MCF 10A (cell line): ENCODE measurements at regions of chr13 and their contacts with region 1.

Region 1: GRCh38 chr13:24851545-24851944 is 87.6 kb downstream of the RNF17 start:
- DNase-seq: peak; percentile 73
- H3K4me3 Mint-ChIP-seq: peak overlapping the region; percentile 56
- H3K27ac Mint-ChIP-seq: peak overlapping the region; percentile 97
- H3K4me1 Mint-ChIP-seq: peaks cover 15% of the 10 kb centered on the region
- H3K27me3 Mint-ChIP-seq: no peaks in the 10 kb centered on the region
- CTCF ChIP-seq: no peak

Region 2: GRCh38 chr13:24683838-24684599 is 167.5 kb before region 1 on chr13:
- CTCF ChIA-PET with region 1: no interaction called
- POLR2A ChIA-PET with region 1: no interaction called
- intact Hi-C with region 1: no loop called
- DNase-seq: peak; percentile 62
- H3K4me3 Mint-ChIP-seq: no peak overlapping the region
- H3K27ac Mint-ChIP-seq: no peak overlapping the region
- H3K4me1 Mint-ChIP-seq: no peaks in the 10 kb centered on the region
- H3K27me3 Mint-ChIP-seq: peaks cover 11% of the 10 kb centered on the region
- CTCF ChIP-seq: peak; percentile 93

Region 3: GRCh38 chr13:24788538-24788937 is 63.0 kb before region 1 on chr13:
- CTCF ChIA-PET with region 1: interaction called, 5 read pairs
- POLR2A ChIA-PET with region 1: interaction called, 19 read pairs
- intact Hi-C with region 1: no loop called
- DNase-seq: peak; percentile 12
- H3K4me3 Mint-ChIP-seq: no peak overlapping the region
- H3K27ac Mint-ChIP-seq: no peak overlapping the region
- H3K4me1 Mint-ChIP-seq: no peaks in the 10 kb centered on the region
- H3K27me3 Mint-ChIP-seq: no peaks in the 10 kb centered on the region
- CTCF ChIP-seq: no peak

Region 4: DNA sequence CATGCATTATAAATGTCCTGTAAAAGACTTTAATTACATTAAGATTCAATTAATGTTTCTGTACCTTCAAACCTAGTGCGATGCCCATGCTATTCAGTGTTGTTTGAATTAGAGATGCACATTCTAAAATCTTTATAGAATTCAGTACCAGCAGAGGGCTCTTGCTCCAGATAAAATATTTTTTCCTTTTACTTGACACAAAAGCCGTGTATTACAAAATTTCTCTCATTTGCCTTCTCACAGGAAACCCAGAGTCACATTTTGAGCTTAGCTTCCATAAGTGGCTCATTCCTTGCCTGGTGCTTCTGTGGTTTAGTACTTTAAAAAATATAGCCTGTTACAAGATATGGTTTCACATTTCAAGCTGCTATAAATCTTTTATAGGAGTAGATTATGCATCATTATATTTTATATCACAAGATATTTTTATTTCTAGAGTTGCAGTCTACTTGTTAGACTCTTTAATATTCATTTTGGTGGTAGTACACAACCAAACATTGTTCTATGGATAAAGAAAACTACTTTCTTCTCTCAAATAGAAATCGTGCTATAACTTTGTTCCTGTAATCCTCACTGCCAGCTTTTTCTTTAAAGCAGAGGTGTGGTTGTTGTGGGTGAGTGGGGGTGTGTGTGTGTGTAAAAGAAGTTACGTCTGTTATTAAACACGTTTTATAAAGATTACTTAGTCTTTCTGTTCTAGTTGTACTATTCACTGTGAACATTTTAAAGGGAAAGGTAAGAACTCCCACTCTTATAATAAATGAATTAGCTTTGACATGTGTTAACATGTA is 13.8 kb after region 1 on chr13:
- CTCF ChIA-PET with region 1: interaction called, 5 read pairs
- POLR2A ChIA-PET with region 1: interaction called, 34 read pairs
- intact Hi-C with region 1: no loop called
- DNase-seq: peak; percentile 16
- H3K4me3 Mint-ChIP-seq: no peak overlapping the region
- H3K27ac Mint-ChIP-seq: no peak overlapping the region
- H3K4me1 Mint-ChIP-seq: peaks cover 16% of the 10 kb centered on the region
- H3K27me3 Mint-ChIP-seq: no peaks in the 10 kb centered on the region
- CTCF ChIP-seq: no peak

Region 5: GRCh38 chr13:24922745-24923591 is 71.4 kb after region 1 on chr13:
- CTCF ChIA-PET with region 1: interaction called, 3 read pairs
- POLR2A ChIA-PET with region 1: interaction called, 8 read pairs
- intact Hi-C with region 1: loop called (anchors 5 kb)
- DNase-seq: peak; percentile 97
- H3K4me3 Mint-ChIP-seq: peak overlapping the region; percentile 89
- H3K27ac Mint-ChIP-seq: peak overlapping the region; percentile 98
- H3K4me1 Mint-ChIP-seq: peaks cover 10% of the 10 kb centered on the region
- H3K27me3 Mint-ChIP-seq: no peaks in the 10 kb centered on the region
- CTCF ChIP-seq: no peak

Region 6: GRCh38 chr13:24943136-24943535 is 91.6 kb after region 1 on chr13:
- CTCF ChIA-PET with region 1: no interaction called
- POLR2A ChIA-PET with region 1: no interaction called
- intact Hi-C with region 1: no loop called
- DNase-seq: no peak
- H3K4me3 Mint-ChIP-seq: no peak overlapping the region
- H3K27ac Mint-ChIP-seq: no peak overlapping the region
- H3K4me1 Mint-ChIP-seq: no peaks in the 10 kb centered on the region
- H3K27me3 Mint-ChIP-seq: no peaks in the 10 kb centered on the region
- CTCF ChIP-seq: no peak

Region 7: DNA sequence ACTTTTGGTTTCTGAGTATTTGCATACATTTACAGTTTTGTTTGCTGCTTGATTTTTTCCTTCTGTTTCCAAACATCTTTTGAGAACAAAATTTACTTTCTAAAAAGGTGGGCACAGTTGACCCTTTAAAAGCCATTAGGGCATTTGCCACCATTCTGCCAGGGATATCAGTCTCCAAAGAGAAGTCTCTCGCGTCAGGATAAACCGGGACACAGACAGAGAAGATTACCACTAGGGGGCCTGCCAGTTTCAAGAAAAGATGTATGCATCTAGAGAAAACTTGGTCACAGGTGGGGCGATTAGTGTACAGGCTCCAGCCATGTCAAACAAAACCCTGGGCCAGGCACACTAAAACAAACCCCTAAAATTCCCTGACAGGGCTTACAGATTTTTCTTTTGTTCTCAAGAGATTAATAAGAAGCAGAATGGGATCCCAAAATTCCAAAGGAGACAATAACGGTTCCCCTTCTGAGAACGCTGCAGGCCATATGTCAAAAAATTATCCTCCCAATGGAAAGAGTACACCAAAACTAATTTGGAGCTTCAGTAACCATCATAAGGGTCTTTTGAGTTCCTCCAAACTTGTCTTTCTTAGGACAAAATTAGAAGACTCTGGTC is 233.7 kb after region 1 on chr13:
- CTCF ChIA-PET with region 1: no interaction called
- POLR2A ChIA-PET with region 1: no interaction called
- intact Hi-C with region 1: no loop called
- DNase-seq: peak; percentile 66
- H3K4me3 Mint-ChIP-seq: no peak overlapping the region
- H3K27ac Mint-ChIP-seq: no peak overlapping the region
- H3K4me1 Mint-ChIP-seq: no peaks in the 10 kb centered on the region
- H3K27me3 Mint-ChIP-seq: no peaks in the 10 kb centered on the region
- CTCF ChIP-seq: peak; percentile 52

Region 8: DNA sequence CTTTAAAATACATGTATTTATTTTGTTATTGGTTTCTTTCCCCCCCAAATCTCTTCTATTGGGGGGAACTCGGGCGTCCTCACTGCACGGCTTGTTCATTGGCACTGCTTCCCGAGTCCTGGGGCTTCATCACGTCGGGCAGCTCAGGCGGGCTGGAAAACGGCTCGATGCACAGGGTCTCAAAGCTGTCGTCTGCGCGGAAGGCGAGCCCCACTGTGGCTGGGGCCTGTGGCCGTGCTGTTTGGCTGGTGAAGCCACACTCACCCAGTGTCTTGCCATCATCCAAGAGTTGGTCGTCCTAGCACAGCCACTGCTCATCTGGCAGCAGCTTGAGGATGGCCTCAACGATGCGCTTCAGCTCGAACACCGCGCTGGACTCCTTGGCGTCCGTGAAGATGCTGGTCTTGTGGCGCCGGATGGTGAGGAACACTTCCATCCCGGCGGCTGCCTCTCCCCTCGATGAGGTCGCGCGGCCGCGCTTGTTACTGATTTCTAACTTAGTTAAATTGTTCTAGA is 514.2 kb after region 1 on chr13:
- CTCF ChIA-PET with region 1: no interaction called
- POLR2A ChIA-PET with region 1: no interaction called
- intact Hi-C with region 1: no loop called
- DNase-seq: no peak
- H3K4me3 Mint-ChIP-seq: no peak overlapping the region
- H3K27ac Mint-ChIP-seq: no peak overlapping the region
- H3K4me1 Mint-ChIP-seq: no peaks in the 10 kb centered on the region
- H3K27me3 Mint-ChIP-seq: peaks cover 24% of the 10 kb centered on the region
- CTCF ChIP-seq: no peak